ENCODE measurements at regions of chr1 and their contacts with region 1.

Region 1: DNA sequence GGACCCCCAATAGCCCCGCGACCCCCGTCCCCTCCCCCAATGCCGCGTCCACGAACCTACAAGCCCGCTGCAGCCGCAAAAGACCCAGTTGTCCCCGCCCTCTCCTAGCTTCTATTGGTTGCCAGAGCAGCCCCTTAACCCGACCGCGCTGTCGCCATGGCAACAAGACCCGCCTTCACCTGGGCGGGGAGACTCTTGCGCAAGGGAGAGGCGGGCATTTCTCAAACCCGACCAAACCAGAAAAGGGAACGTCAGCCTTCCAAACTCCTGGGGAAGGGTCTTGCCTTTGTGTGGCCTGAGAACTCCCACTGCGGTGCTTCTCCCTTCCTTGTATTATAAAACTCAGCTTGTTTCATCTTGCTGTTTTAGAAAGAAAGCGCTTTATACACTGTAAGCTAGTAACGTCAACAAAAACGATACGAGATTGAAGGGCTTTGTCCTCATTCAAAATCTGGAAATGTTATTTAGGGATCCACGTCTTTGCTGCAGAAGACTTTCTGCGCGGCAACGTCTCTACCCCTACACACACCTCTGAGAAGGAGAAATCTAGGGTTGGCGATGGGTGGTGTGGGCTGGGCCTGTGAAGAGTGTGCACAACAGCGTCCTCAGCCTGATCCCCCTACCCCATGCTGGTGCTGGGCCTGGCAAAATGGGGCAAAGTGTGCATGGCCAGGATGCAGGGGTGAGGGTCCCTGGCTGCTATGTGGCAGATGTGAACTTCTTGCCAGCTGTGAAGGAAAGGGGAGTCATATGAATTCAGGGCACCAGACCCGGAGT is at the start of gene TMEM9:
- DNase-seq: peak; percentile 87
- ATAC-seq: peak; percentile 93
- H3K4me3 ChIP-seq: peak within 1 kb of the TSS; percentile 77 to 95 (median 85)
- H3K27ac ChIP-seq: peak within 1 kb of the TSS; percentile 42
- H3K4me1 ChIP-seq: peaks cover 19% of the 10 kb centered on the region
- H3K27me3 ChIP-seq: no peaks in the 10 kb centered on the region; a peak in 1 of 5 replicates
- CTCF ChIP-seq: no peak
- EP300 ChIP-seq: 0 out of 4 replicates have a peak, but pooled peaks of 1 of the 2 experiments have one; percentile 45
- POLR2A ChIP-seq: peak; percentile 52 to 55; a peak in 2 of 4 replicates
- RAD21 ChIP-seq: no peak
- total RNA-seq, gene TMEM9: 33.6 and 60.9 TPM in 2 replicates

Region 2: GRCh38 chr1:201170533-201171062 is 16.0 kb after region 1 on chr1:
- CTCF ChIA-PET with region 1: no interaction called
- POLR2A ChIA-PET with region 1: interaction called, 30 read pairs
- in situ Hi-C with region 1: no loop called
- intact Hi-C with region 1: loop called (anchors 1 kb)
- DNase-seq: peak; percentile 99
- ATAC-seq: peak; percentile 97
- H3K4me3 ChIP-seq: peak overlapping the region; percentile 51 to 76 (median 54)
- H3K27ac ChIP-seq: peak overlapping the region; percentile 96
- H3K4me1 ChIP-seq: peaks cover 60% of the 10 kb centered on the region
- H3K27me3 ChIP-seq: no peaks in the 10 kb centered on the region; a peak in 2 of 5 replicates
- CTCF ChIP-seq: no peak
- EP300 ChIP-seq: peak; percentile 32 to 90; a peak in 2 of 4 replicates
- POLR2A ChIP-seq: peak; percentile 84 to 92
- RAD21 ChIP-seq: no peak

Region 3: GRCh38 chr1:201175820-201176500 is 21.4 kb after region 1 on chr1:
- CTCF ChIA-PET with region 1: no interaction called
- POLR2A ChIA-PET with region 1: interaction called, 30 read pairs
- in situ Hi-C with region 1: no loop called
- intact Hi-C with region 1: no loop called
- DNase-seq: no peak
- ATAC-seq: no peak
- H3K4me3 ChIP-seq: no peak overlapping the region
- H3K27ac ChIP-seq: no peak overlapping the region
- H3K4me1 ChIP-seq: peaks cover 71% of the 10 kb centered on the region
- H3K27me3 ChIP-seq: peaks cover 0 to 10% of the 10 kb centered on the region in 2 experiments; a peak in 1 of 5 replicates
- CTCF ChIP-seq: no peak
- EP300 ChIP-seq: no peak
- POLR2A ChIP-seq: no peak
- RAD21 ChIP-seq: no peak

Region 4: DNA sequence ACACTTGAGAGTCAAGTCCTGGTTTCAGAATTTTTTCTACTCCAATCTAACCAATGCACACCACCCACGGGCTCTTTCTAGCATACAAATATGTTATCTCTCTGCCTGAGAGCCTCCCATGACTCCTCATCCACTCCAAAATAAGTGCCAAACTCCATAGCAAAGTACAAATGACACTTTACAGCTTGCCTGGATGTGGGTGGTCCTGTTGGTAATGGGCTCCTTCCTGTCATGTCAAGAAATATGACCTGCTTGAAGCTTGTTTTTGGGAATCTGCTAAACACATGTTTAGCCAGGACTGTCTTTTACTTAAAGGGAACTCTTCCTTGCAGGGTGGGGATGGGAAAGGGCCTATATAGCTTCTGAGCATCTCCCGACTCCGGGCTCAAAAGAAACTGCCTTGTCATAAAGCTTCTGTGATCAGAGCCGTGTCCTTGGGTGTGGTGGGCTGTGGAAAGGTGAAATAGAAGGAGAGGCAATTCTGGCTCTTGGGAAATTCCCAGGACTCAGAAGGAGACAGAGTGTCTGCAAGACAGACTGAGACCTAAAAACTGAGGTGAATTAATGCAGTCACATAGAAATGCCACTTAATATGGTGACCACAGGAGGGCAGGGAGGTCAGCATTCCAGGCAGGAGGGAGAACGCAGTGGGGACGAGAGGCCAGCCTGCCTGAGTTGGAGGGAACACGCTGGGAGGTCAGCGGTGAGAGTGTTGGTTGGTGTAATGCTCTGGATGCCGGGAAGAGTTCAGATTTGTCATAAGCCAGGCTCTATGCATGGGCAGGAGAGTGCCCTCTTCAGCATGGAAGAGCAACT is 29.9 kb after region 1 on chr1:
- CTCF ChIA-PET with region 1: interaction called, 16 read pairs
- POLR2A ChIA-PET with region 1: no interaction called
- in situ Hi-C with region 1: no loop called
- intact Hi-C with region 1: loop called (anchors 1 kb)
- DNase-seq: peak; percentile 58
- ATAC-seq: peak; percentile 98
- H3K4me3 ChIP-seq: no peak overlapping the region
- H3K27ac ChIP-seq: no peak overlapping the region
- H3K4me1 ChIP-seq: peaks cover 17% of the 10 kb centered on the region
- H3K27me3 ChIP-seq: peaks cover 3 to 54% of the 10 kb centered on the region in 2 experiments; a peak in 4 of 5 replicates
- CTCF ChIP-seq: peak; percentile 74
- EP300 ChIP-seq: no peak
- POLR2A ChIP-seq: no peak
- RAD21 ChIP-seq: peak; percentile 53; the same call in 1 of the 2 replicates